Dendritic cell treated with granulocyte-macrophage colony-stimulating factor and Interleukin-4, amounts not matched to agents 40 ng/mL and 50 ng/mL, for 4 days (primary cell): ENCODE measurements at regions of chr12 and their contacts with region 1.

Region 1: DNA sequence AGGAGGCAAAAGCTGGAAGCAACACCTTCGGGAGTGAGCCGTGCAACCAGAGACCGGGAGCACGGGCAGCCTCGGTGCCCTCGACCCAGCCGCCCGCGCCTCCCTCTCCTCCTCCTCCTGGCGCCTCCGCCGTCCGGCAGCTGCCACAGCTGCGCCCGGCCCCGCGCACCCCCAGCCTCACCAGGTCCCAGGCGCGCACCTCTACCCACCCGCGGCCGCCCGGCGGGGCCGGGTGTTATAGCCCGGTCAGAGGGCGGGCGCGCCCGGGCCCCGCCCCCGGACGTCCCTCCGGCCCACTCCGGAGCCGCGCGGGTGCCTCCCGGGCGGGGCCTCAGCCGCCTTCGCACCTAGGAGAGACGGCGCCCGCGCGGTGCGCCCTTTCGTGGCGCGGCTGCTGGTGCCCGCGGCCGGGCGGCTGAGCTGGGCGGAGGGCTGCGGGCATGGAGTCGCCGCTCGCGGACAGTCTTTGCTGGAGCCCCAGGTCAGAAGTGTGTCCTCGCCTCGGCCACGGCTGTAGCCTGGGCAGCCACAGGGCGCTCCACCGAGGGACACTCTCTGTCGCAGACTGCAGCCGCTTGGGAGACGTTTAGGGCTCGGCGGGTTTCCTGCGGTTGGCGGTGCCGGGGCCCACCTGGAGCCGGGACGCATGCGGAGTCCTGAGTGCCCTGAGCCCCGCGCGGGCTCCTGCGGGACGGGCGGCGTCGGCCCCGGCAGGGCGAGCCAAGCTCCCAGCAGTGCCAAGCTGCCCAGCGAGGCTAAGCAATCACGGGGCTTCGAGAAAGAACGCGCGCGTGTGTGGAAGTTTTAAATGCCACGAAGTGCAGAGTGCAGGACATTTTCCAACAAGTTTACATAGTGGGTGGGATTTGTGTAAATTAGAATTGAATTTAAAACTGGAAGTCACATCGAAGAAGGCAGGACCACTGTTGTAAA is at the start of gene CPM:
- H3K4me3 Mint-ChIP-seq: peak within 1 kb of the TSS; percentile 85
- H3K27ac Mint-ChIP-seq: peak within 1 kb of the TSS; percentile 89
- H3K4me1 Mint-ChIP-seq: peaks cover 12% of the 10 kb centered on the region
- H3K27me3 Mint-ChIP-seq: peaks cover 7% of the 10 kb centered on the region

Region 2: DNA sequence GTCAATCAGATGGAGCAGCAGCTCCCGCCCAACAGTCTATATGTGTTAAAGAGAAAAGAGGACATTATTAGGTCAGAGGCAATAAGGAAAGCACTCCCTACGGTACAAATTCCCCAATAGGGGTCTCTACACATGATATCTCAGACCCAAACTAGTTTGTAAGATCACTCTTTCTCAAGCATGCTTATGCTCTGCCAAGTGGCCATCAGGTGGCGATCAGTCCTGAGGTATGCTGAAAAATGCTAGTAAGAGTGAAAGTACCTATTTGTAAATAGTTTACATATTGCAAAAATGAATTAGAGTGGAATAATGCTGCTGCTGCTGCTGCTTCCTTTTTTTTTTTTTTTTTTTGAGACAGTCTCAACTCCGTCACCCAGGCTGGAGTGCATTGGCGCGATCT is 61.3 kb before region 1 on chr12:
- intact Hi-C with region 1: no loop called
- H3K4me3 Mint-ChIP-seq: no peak overlapping the region
- H3K27ac Mint-ChIP-seq: no peak overlapping the region
- H3K4me1 Mint-ChIP-seq: peaks cover 5% of the 10 kb centered on the region
- H3K27me3 Mint-ChIP-seq: no peaks in the 10 kb centered on the region

Region 3: DNA sequence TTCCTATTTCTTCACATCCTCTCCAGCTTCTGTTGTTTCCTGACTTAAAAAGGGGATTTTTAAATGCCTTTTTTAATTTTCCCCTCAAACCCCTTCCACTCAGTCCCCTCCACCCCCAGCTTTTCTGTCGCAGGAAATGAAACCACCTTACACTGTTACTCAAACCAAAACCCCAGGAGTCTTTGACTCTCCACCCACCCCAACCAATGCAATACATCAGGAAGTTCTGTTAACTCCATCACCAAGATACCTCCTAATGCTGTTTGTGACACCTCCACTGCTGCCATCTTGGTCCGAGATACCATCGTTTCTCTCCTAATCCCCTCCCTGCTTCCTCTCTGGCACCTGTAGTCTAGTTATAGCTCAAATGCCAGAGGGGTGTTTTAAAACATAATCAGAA is 25.1 kb after region 1 on chr12:
- intact Hi-C with region 1: no loop called
- H3K4me3 Mint-ChIP-seq: no peak overlapping the region
- H3K27ac Mint-ChIP-seq: peak overlapping the region; percentile 24
- H3K4me1 Mint-ChIP-seq: peaks cover 43% of the 10 kb centered on the region
- H3K27me3 Mint-ChIP-seq: no peaks in the 10 kb centered on the region

Region 4: GRCh38 chr12:69070319-69071090 is 137.3 kb after region 1 on chr12:
- intact Hi-C with region 1: loop called (anchors 1 kb)
- H3K4me3 Mint-ChIP-seq: no peak overlapping the region
- H3K27ac Mint-ChIP-seq: peak overlapping the region; percentile 23
- H3K4me1 Mint-ChIP-seq: peaks cover 12% of the 10 kb centered on the region
- H3K27me3 Mint-ChIP-seq: peaks cover 1% of the 10 kb centered on the region